Calu3 (cell line): ENCODE measurements at regions of chr7 and their contacts with region 1.

Region 1: DNA sequence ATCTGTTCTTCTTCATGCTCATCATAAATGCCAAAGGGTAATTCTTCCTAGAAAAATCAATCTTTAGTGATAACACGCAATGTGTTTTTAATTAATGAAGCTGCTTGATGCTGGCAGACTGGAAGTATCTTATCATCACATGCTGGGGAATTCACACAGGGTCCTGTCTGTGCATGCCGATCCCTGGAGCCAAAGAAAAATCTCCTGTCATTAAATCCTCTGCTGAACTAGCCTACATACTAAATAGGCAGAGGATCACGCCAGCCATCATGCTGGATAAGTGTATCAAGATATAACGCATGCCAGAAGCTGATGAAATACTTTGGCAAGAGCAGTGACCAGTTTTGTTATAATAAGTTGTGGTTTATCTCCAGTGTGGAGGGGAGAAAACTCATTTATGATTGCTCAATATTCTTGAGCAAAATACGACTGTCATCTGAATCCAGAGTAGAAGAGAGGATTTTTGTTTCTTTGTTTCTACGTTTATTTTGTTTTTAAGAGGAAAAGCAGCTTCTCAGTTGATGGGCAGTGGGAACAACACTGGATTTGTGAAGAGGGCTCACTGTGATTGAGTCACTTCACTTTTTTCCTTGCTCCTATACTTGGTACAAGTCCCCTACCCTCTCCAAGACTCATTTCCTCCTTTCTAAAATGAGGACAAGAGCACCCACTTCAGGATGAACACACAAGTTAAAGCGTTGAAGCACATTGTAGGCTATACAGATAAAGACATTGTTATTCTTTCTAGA is 649.1 kb downstream of the TNS3 start:
- DNase-seq: peak; percentile 41
- H3K4me3 Mint-ChIP-seq: peak overlapping the region; percentile 18
- H3K27ac Mint-ChIP-seq: peak overlapping the region; percentile 99
- H3K4me1 Mint-ChIP-seq: peaks cover 59% of the 10 kb centered on the region
- H3K27me3 Mint-ChIP-seq: no peaks in the 10 kb centered on the region
- CTCF ChIP-seq: no peak

Region 2: DNA sequence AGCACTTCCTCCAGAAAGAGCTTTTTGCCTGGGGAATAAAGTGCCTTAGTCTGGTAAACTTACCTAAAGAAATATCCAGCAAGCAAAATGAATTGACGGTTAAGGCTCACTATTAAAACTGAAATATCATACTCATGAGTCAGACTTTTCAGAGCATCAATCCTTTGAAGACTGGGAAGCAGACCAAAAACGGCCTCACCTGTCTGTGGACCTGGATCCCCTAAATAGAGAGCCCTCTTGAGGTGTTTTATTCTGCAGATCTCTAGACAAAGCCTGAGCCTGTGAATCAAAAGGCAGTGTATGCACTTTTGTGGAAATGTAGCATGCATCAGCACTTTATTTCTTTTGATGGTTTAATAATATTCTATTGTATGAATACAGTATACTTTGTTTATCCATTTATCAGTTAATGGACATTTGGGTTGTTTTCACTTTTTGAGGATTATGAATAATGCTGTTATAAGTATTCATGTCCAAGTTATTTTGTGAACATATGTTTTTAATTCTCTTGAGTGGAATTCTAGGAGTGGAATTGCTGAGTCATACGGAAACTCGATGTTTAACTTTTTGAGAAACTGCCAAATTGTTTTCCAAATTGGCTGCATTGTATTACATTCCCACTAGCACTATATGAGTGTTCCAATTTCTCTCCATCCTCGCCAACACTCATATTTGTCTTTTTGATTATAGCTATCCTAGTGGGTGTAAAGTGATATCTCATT is 562.8 kb before region 1 on chr7:
- CTCF ChIA-PET with region 1: no interaction called
- intact Hi-C with region 1: loop called (anchors 10 kb)
- DNase-seq: no peak
- H3K4me3 Mint-ChIP-seq: no peak overlapping the region
- H3K27ac Mint-ChIP-seq: no peak overlapping the region
- H3K4me1 Mint-ChIP-seq: no peaks in the 10 kb centered on the region
- H3K27me3 Mint-ChIP-seq: no peaks in the 10 kb centered on the region
- CTCF ChIP-seq: no peak

Region 3: DNA sequence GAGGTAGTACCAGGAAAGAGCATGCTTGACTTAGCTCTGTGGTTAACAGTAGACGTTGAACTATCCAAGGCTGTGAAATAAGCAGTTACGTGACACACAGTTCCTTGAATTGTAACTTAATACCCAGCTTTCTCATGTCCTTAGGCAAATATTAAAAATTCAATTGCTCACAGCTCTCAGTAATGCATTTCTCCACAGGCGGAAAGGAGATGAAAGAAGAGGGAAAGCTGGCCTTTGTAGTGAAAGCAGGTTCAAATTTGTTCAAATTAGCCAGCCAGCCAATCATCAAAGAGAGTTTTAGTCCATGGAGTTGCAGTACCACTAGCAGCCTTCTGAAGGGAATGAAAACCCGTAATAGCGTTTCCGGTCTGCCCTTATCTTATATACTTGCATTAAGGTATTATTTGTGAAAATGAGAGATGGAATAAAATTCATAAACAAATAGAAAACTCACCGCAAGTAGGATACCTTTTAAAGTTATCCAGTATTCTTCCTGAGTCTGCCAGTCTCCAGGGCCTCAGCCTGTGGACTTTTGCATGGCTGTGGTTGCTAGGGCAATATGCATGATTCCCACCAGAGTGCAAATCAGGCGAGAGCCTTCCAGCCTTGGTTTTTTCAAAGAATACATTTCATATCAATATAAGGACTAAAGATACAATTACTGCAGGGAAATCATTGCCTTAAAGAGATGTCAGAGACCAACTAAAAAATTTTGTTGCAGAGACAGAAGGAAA is 146.5 kb before region 1 on chr7:
- CTCF ChIA-PET with region 1: interaction called, 6 read pairs
- intact Hi-C with region 1: loop called (anchors 1 kb)
- DNase-seq: peak; percentile 69
- H3K4me3 Mint-ChIP-seq: peak overlapping the region; percentile 45
- H3K27ac Mint-ChIP-seq: peak overlapping the region; percentile 95
- H3K4me1 Mint-ChIP-seq: peaks cover 29% of the 10 kb centered on the region
- H3K27me3 Mint-ChIP-seq: no peaks in the 10 kb centered on the region
- CTCF ChIP-seq: no peak

Region 4: GRCh38 chr7:47622946-47623640 is 690.2 kb after region 1 on chr7:
- CTCF ChIA-PET with region 1: no interaction called
- intact Hi-C with region 1: no loop called
- DNase-seq: no peak
- H3K4me3 Mint-ChIP-seq: no peak overlapping the region
- H3K27ac Mint-ChIP-seq: no peak overlapping the region
- H3K4me1 Mint-ChIP-seq: peaks cover 15% of the 10 kb centered on the region
- H3K27me3 Mint-ChIP-seq: no peaks in the 10 kb centered on the region
- CTCF ChIP-seq: no peak